A549 (cell line): ENCODE measurements at regions of chr1 and their contacts with region 1.

Region 1: DNA sequence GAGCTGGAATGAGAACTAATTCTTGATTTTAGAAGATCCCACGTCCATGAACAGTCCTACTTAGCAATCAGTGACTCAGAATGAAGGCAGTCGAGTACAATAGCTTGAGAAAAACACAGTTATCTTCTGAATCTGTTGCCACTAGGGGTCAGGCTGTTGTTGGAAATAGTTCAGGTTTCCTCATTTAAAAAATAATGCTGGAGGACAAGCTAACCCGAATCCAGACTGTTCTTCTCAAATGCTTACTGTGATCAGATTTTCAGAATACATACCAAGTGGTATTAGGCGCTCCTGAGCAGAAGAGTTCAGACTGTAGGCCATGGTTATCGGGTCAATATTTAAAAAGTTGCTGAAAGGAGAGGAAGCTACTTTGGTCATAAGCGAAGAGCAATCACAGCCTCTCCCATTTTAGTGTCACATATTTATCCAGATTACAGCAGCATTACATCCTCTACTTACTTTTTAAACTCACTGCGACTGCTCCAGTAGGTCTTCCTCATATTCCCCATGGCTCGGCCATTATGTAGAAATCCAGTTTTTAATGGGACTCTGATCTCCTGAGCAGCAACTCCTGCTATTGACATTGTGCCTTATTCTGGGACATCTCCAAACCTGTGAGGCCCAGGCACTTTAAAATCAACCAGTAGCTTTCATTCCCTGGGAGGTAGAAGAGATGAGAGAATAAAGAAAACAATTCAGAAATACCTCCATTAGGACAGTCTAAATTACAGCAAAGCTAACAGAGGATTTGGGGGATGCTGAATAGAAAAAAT is 10.9 kb downstream of the ERRFI1 start:
- DNase-seq: peak; percentile 22 to 72
- ATAC-seq: peak; percentile 41 to 45; a peak in 4 of 6 replicates
- H3K4me3 ChIP-seq: peak overlapping the region; percentile 26; the same call in 1 of the 3 replicates
- H3K27ac ChIP-seq: peak overlapping the region; percentile 68 to 82
- H3K4me1 ChIP-seq: peaks cover 100% of the 10 kb centered on the region
- CTCF ChIP-seq: peak; percentile 58
- EP300 ChIP-seq: no peak
- POLR2A ChIP-seq: no peak
- RAD21 ChIP-seq: peak; percentile 73 to 77

Region 2: DNA sequence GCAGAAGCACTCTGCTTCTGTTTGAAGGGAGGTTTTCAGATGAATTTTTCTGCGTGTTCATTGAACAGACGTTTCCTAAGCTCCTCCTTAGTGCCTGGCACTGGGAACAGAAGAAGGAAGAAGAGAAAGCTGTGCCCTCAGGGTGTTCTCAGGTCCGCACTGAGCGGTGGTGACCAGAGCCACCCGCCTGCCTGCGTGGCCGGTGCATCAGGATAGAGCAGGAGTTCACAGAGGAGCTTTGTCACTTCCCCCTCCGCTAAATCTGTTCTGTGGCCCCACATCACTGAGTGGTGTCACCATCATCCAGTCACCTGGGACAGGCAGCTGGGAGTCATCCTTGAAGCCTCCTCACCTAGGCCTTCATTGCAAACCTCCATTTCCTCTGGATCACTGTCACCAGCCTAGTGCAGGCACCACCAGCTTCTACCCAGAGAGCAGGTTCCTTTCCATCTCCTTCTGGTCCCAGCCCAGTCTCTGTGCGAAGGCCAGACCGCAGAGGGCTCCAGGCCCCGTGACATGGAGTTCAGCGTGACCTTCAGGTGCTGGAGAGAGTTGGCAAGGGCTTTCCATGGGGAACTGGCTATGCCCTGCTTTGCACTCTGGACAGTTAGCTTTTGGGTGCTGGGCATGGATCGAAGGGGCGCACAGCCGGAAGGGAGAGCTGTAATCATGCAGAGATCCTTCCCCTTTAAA is 32.0 kb before region 1 on chr1:
- CTCF ChIA-PET with region 1: interaction called, 86 read pairs
- POLR2A ChIA-PET with region 1: no interaction called
- DNase-seq: no peak
- ATAC-seq: no peak
- H3K4me3 ChIP-seq: no peak overlapping the region
- H3K27ac ChIP-seq: peak overlapping the region; percentile 63 to 72; a peak in 4 of 6 replicates
- H3K4me1 ChIP-seq: peaks cover 7% of the 10 kb centered on the region; the same call in 2 of the 3 replicates
- CTCF ChIP-seq: no peak
- EP300 ChIP-seq: no peak
- POLR2A ChIP-seq: no peak
- RAD21 ChIP-seq: no peak

Region 3: DNA sequence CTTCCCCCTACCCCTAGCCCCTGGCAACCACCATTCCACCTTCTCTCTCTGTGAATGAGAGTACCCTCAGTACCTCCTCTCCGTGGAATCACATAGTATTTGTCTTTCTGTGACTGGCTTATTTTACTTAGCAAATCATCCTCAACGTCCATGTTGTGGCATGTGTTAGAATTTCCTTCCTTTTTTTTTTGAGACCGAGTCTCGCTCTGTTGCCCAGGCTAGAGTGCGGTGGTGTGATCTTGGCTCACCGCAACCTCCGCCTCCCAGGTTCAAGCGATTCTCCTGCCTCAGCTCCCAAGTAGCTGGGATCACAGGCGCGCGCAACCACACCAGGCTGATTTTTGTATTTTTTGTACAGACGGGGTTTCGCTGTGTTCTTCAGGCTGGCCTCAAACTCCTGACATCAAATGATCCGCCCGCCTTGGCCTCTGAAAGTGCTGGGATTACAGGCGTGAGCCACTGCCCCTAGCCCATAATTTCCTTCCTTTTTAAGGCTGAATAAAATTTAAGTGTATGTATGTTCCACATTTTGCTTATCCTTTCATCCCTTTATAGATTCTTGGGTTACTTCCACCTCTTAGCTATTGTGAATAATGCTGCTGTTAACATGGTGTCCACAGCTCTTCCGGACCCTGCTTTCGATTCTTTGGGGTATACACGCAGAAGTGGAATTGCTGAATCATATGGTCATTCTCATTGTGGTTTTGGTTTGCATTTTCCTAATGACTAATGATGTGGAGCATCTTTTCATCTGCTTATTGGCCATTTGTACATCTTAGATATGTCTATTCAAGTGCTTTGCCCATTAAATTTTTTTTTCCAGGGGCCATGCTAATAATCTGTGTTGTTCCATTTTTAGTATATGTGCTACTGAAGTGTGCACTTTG is 21.4 kb before region 1 on chr1:
- CTCF ChIA-PET with region 1: interaction called, 15 read pairs
- POLR2A ChIA-PET with region 1: interaction called, 6 read pairs
- DNase-seq: no peak
- ATAC-seq: no peak
- H3K4me3 ChIP-seq: no peak overlapping the region
- H3K27ac ChIP-seq: peak overlapping the region; percentile 11 to 49; a peak in 2 of 6 replicates
- H3K4me1 ChIP-seq: peaks cover 1% of the 10 kb centered on the region; the same call in 2 of the 3 replicates
- CTCF ChIP-seq: no peak
- EP300 ChIP-seq: no peak
- POLR2A ChIP-seq: no peak
- RAD21 ChIP-seq: no peak

Region 4: DNA sequence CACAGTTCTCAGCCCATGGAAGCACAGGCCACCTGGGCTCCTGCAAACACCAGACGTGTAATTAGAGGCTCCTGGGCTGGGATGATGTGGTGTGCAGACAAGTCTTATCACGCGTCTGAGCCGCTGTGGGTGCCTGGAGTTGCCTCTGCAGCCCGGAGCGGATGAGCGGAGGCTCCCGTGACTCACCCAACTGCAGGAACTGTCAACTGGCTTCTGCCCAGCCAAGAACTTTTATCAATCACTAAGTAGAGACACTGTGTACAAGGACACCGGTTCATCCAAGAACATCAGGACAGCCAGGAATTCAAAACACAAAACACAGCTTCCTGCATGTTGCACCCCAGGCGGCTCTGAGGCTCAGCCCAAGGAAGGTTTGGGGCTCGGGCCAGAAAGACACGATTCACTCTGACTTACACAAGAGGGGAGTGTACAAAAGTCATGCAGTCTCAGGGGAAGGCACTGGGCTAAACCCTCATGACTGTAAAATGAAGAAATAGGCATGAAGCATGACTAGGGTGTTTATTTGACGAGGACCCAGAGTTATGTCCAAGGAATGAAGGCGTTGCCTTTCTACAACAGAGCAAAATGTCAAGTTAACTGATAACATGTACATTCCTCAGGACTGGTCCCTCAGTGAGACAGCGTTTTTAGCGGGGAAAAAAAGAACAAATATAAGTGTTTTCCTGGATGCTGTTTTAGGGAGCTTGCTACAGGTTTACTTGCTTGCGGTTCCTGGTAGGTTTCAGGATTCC is 10.2 kb before region 1 on chr1:
- CTCF ChIA-PET with region 1: interaction called, 15 read pairs
- POLR2A ChIA-PET with region 1: interaction called, 3 read pairs
- DNase-seq: peak; percentile 66 to 95
- ATAC-seq: peak; percentile 81 to 91
- H3K4me3 ChIP-seq: peak overlapping the region; percentile 15; the same call in 1 of the 3 replicates
- H3K27ac ChIP-seq: peak overlapping the region; percentile 93 to 94
- H3K4me1 ChIP-seq: peaks cover 53% of the 10 kb centered on the region
- CTCF ChIP-seq: no peak
- EP300 ChIP-seq: peak; percentile 82 to 90; a peak in 4 of 5 replicates
- POLR2A ChIP-seq: no peak
- RAD21 ChIP-seq: peak in 1 of 2 experiments; percentile 31; a peak in 1 of 5 replicates

Region 5: GRCh38 chr1:8026153-8026975 is 11.1 kb after region 1 on chr1 and contains the start of gene ERRFI1:
- CTCF ChIA-PET with region 1: interaction called, 28 read pairs
- POLR2A ChIA-PET with region 1: interaction called, 9 read pairs
- DNase-seq: peak; percentile 55 to 94
- ATAC-seq: peak; percentile 75 to 76
- H3K4me3 ChIP-seq: peak within 1 kb of the TSS; percentile 91
- H3K27ac ChIP-seq: peak within 1 kb of the TSS; percentile 98 to 100
- H3K4me1 ChIP-seq: peaks cover 28% of the 10 kb centered on the region
- CTCF ChIP-seq: no peak
- EP300 ChIP-seq: no peak
- POLR2A ChIP-seq: peak; percentile 97
- RAD21 ChIP-seq: no peak
- polyA plus RNA-seq, gene ERRFI1: 193 and 217 TPM in 2 replicates

Region 6: DNA sequence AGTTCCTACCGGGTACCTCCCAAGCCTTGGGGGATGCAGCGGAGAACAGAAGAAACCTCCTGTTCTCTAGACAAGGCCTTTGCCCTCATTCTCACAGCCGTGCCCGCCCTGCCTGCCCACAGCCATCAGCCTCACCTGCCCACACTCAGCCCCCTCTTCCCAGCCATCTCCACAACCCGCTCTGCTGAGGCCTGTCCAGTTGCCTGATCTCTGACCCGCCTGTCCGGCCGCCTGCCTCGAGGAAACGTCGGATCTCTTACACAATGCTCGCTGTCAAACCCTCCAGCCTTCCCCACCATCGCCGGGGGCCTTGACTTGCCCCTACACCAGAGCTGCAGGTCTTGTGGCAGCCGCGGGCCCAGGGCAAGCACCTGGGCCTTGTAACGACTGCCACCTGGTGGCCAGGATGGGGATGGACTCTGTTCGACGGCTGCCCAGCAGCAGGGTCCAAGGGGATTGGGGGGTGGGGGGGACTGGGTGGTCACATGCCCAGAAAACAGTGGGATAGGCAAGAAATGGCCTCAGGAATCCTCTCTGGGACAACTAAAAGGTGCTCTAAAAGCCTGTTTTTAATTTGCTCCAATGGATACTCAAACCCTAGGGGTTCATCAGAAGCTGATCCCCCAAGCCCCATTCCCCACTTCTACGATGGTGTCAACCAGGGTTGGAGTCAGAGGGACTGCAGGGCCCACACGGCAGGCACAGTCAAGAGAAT is 333.7 kb after region 1 on chr1:
- CTCF ChIA-PET with region 1: interaction called, 26 read pairs
- POLR2A ChIA-PET with region 1: interaction called, 3 read pairs
- DNase-seq: peak; percentile 56 to 58
- ATAC-seq: peak; percentile 60 to 75; a peak in 5 of 6 replicates
- H3K4me3 ChIP-seq: no peak overlapping the region
- H3K27ac ChIP-seq: peak overlapping the region; percentile 73 to 82; a peak in 5 of 6 replicates
- H3K4me1 ChIP-seq: peaks cover 17% of the 10 kb centered on the region
- CTCF ChIP-seq: peak; percentile 78
- EP300 ChIP-seq: no peak
- POLR2A ChIP-seq: no peak
- RAD21 ChIP-seq: peak; percentile 87 to 90